ENCODE measurements at regions of chr1 and their contacts with region 1.

Region 1: GRCh38 chr1:112715264-112716053 is at the start of gene PPM1J:
- DNase-seq: peak; percentile 91
- H3K4me3 ChIP-seq: peak within 1 kb of the TSS; percentile 52
- H3K27ac ChIP-seq: no peak within 1 kb of the TSS
- H3K4me1 ChIP-seq: peaks cover 19% of the 10 kb centered on the region
- H3K27me3 ChIP-seq: peaks cover 48% of the 10 kb centered on the region
- CTCF ChIP-seq: no peak
- total RNA-seq, gene PPM1J: 0.28 and 0.52 TPM in 2 replicates

Region 2: GRCh38 chr1:112660072-112660471 is 55.4 kb before region 1 on chr1:
- CTCF ChIA-PET with region 1: no interaction called
- POLR2A ChIA-PET with region 1: no interaction called
- intact Hi-C with region 1: no loop called
- DNase-seq: no peak
- H3K4me3 ChIP-seq: no peak overlapping the region
- H3K27ac ChIP-seq: no peak overlapping the region
- H3K4me1 ChIP-seq: no peaks in the 10 kb centered on the region
- H3K27me3 ChIP-seq: no peaks in the 10 kb centered on the region
- CTCF ChIP-seq: no peak

Region 3: DNA sequence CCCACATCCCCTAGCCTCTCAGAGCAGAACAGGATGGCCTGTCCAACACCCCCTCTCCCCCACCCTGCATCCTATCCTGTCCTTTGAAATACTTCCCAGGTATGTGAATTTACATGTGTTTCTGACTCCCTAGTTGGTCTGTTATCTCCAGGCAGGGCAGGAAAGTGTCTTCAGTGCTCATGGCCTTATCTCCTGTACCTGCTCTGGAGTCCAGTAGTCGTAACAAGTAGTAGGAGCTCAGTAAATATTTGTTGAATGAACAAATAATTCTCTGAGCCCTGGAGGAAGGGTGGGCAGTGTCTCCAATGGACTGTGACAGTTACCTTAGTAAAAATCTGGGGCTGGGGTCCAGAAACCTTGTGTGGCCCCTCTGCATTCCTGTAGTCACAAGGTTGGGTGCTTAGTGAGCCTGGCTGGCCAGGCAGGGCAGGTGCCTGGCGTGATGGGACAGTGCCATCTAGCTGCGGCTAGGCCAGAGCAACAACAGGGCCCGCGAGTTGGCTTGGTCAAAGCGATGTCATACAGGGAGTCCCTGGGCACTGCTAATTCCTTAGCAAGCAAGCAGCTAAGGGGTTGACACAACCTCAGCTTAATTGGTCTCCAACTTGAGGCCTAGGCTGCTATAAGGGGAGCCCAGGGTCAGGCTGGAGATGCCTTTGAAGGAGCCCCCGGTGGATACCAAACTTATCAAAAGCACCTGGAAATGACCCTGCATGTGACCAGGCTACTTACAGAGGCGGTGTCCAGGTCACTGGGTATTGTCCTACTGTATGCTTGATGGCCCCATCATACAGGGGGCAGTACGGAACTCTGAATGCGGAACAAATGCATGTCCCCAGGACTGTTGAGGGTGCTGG is 88.7 kb after region 1 on chr1:
- CTCF ChIA-PET with region 1: interaction called, 11 read pairs
- POLR2A ChIA-PET with region 1: no interaction called
- intact Hi-C with region 1: loop called (anchors 1 kb)
- DNase-seq: peak; percentile 65
- H3K4me3 ChIP-seq: no peak overlapping the region
- H3K27ac ChIP-seq: no peak overlapping the region
- H3K4me1 ChIP-seq: no peaks in the 10 kb centered on the region
- H3K27me3 ChIP-seq: peaks cover 77% of the 10 kb centered on the region
- CTCF ChIP-seq: peak; percentile 83

Region 4: DNA sequence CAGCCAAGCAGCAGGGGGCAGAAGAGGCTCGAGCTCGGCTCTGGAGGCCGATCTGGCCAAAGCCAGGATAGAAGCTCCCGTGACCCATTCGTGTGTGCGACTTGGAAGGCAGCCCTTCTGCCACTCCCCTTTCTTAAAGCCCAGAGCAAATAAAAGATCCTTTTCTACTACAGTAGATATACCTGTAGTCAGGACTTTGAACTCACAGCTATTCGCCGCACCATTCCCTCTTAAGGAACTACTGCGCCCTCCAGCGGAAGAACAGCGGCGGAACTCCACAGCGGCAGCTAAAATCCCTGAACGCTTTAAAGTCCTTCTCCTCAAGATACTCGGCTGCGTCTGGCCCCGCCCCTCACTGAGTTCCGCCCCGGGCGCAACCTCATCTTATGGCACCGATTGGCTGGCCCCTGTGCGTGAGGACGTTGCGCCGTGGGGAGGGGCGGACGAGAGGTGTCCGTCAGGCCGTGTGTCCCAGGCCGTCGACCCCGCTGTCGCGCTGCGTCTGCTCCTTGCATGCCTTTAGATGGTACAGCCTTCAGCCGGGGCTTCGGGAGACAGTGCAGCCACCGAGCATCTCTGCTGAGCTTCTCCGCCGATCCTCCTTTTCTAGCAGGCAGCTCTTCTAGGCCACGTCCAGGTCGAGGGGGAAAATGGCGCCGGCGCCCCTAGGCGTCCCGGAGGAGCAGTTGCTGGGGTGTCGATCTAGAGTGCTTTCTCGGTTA is 357.5 kb after region 1 on chr1 and contains the start of gene LRIG2:
- CTCF ChIA-PET with region 1: interaction called, 14 read pairs
- POLR2A ChIA-PET with region 1: no interaction called
- intact Hi-C with region 1: loop called (anchors 2 kb)
- DNase-seq: peak; percentile 99
- H3K4me3 ChIP-seq: peak within 1 kb of the TSS; percentile 71
- H3K27ac ChIP-seq: peak within 1 kb of the TSS; percentile 75
- H3K4me1 ChIP-seq: peaks cover 10% of the 10 kb centered on the region
- H3K27me3 ChIP-seq: no peaks in the 10 kb centered on the region
- CTCF ChIP-seq: peak; percentile 98
- total RNA-seq, gene LRIG2: 13.9 and 14.8 TPM in 2 replicates

Region 5: DNA sequence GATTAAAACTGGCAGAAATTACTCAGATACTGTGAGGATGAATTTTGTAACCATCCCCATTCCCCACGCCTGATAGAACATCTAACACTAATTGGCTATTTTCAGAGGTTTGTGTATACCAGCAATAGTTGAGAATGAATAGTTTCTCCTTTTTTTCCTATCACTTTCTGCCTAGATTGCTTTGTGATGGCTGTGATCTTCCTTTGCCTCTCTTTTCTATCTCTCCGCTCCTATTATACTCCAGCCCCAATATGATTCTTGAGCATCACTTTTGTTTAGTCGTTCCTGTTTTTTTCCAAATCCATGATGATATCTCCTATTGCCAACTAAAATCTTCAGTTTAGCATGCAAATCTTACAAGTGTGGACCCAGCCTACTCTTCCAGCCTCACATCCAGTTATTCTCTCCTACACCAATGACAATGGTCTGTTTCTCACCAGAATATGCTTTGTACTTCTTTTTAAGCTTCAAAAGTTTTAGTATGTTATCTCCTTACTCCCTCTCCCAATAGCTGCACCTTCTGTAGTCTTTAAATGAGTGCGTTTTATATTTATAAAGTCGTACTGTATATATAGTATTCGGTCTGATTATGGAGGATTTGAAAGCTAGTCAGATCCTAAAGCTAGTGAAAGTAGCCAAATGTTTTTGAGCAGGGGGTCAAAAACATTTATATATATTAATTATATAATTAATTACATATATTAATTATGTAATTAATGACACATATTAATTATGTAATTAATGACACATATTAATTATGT is 700.0 kb after region 1 on chr1:
- CTCF ChIA-PET with region 1: no interaction called
- POLR2A ChIA-PET with region 1: no interaction called
- intact Hi-C with region 1: no loop called
- DNase-seq: peak; percentile 43
- H3K4me3 ChIP-seq: no peak overlapping the region
- H3K27ac ChIP-seq: no peak overlapping the region
- H3K4me1 ChIP-seq: no peaks in the 10 kb centered on the region
- H3K27me3 ChIP-seq: no peaks in the 10 kb centered on the region
- CTCF ChIP-seq: no peak